ENCODE measurements at regions of chr21 and their contacts with region 1.

Region 1: GRCh38 chr21:41175154-41176045 is 7.4 kb downstream of the BACE2 start:
- DNase-seq: peak; percentile 25
- H3K4me3 ChIP-seq: no peak overlapping the region
- H3K27ac ChIP-seq: no peak overlapping the region
- H3K4me1 ChIP-seq: peaks cover 0 to 36% (median 24%) of the 10 kb centered on the region in 4 donors
- H3K27me3 ChIP-seq: no peaks in the 10 kb centered on the region
- CTCF ChIP-seq: no peak
- EP300 ChIP-seq: no peak
- POLR2A ChIP-seq: no peak

Region 2: GRCh38 chr21:41152147-41152546 is 23.3 kb before region 1 on chr21:
- in situ Hi-C with region 1: no loop called
- intact Hi-C with region 1: no loop called
- DNase-seq: no peak
- H3K4me3 ChIP-seq: no peak overlapping the region
- H3K27ac ChIP-seq: no peak overlapping the region
- H3K4me1 ChIP-seq: peaks cover 0 to 17% (median 7%) of the 10 kb centered on the region in 4 donors
- H3K27me3 ChIP-seq: no peaks in the 10 kb centered on the region
- CTCF ChIP-seq: no peak
- EP300 ChIP-seq: no peak
- POLR2A ChIP-seq: no peak

Region 3: GRCh38 chr21:41370840-41371684 is 195.7 kb after region 1 on chr21:
- in situ Hi-C with region 1: no loop called
- intact Hi-C with region 1: no loop called
- DNase-seq: no peak
- H3K4me3 ChIP-seq: no peak overlapping the region
- H3K27ac ChIP-seq: no peak overlapping the region
- H3K4me1 ChIP-seq: peaks cover 0 to 28% (median 0%) of the 10 kb centered on the region in 4 donors
- H3K27me3 ChIP-seq: no peaks in the 10 kb centered on the region
- CTCF ChIP-seq: no peak
- EP300 ChIP-seq: no peak
- POLR2A ChIP-seq: no peak

Region 4: GRCh38 chr21:42227909-42228708 is 1052.7 kb after region 1 on chr21:
- in situ Hi-C with region 1: no loop called
- intact Hi-C with region 1: loop called (anchors 5 kb)
- DNase-seq: peak; percentile 95
- H3K4me3 ChIP-seq: no peak overlapping the region
- H3K27ac ChIP-seq: peak overlapping the region; percentile 71 to 84 (median 78)
- H3K4me1 ChIP-seq: peaks cover 28 to 80% (median 41%) of the 10 kb centered on the region in 4 donors
- H3K27me3 ChIP-seq: no peaks in the 10 kb centered on the region
- CTCF ChIP-seq: no peak
- EP300 ChIP-seq: no peak
- POLR2A ChIP-seq: no peak

Measured in transverse colon (tissue), 4 donors.